PC-9 (cell line): ENCODE measurements at regions of chr4 and their contacts with region 1.

Region 1: GRCh38 chr4:81405894-81406401 is 65.8 kb downstream of the RASGEF1B start:
- DNase-seq: peak; percentile 8 to 52
- H3K4me3 ChIP-seq: no peak overlapping the region
- H3K27ac ChIP-seq: no peak overlapping the region
- H3K4me1 ChIP-seq: no peaks in the 10 kb centered on the region
- H3K27me3 ChIP-seq: no peaks in the 10 kb centered on the region
- CTCF ChIP-seq: peak; percentile 87

Region 2: DNA sequence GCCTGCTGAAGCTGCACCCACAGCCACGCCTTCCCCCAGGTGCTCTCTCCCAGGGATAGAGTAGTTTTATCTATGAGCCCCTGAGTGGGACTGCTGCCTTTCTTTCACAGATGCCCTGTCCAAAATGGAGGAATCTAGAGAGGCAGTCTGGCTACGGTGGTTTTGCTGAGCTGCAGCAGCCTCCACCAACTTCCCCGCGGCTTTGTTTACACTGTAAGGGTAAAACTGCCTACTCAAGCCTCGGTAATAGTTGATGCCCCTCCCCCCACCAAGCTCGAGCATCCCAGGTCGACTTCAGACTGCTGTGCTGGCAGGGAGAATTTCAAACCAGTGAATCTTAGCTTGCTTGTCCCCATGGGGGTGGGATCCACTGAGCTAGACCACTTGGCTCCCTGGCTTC is 275.4 kb before region 1 on chr4:
- CTCF ChIA-PET with region 1: no interaction called
- POLR2A ChIA-PET with region 1: no interaction called
- intact Hi-C with region 1: no loop called
- DNase-seq: no peak
- H3K4me3 ChIP-seq: no peak overlapping the region
- H3K27ac ChIP-seq: no peak overlapping the region
- H3K4me1 ChIP-seq: no peaks in the 10 kb centered on the region
- H3K27me3 ChIP-seq: no peaks in the 10 kb centered on the region
- CTCF ChIP-seq: no peak

Region 3: DNA sequence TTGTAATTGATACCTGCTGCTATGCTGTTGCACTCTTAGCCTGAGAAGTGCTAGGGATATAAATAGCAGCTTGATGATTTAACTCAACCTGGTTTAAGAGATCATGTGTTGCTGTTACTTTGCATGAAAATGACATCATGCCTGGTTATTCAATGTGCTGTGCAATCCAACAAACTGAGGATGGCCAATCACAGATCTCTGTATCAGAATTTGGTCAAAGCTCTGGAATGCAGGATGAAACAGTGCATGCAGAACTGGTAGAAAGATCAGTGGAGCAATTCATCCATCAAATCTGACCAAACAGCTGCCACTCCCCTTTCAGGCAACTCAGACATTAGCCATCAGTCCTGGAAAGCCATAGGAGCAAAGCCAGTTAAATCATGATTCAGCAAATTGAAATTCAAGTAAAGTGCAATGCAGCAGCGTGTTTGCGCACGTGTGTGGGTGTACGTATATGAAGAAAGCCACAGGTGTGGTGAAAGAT is 226.1 kb after region 1 on chr4:
- CTCF ChIA-PET with region 1: no interaction called
- POLR2A ChIA-PET with region 1: no interaction called
- intact Hi-C with region 1: loop called (anchors 10 kb)
- DNase-seq: peak; percentile 41 to 79
- H3K4me3 ChIP-seq: no peak overlapping the region
- H3K27ac ChIP-seq: peak overlapping the region; percentile 59
- H3K4me1 ChIP-seq: 0 out of 2 replicates have a peak, but pooled peaks cover 5% of the 10 kb centered on the region
- H3K27me3 ChIP-seq: no peaks in the 10 kb centered on the region
- CTCF ChIP-seq: no peak

Region 4: GRCh38 chr4:81844717-81845116 is 438.8 kb after region 1 on chr4:
- CTCF ChIA-PET with region 1: no interaction called
- POLR2A ChIA-PET with region 1: no interaction called
- intact Hi-C with region 1: loop called (anchors 1 kb)
- DNase-seq: peak; percentile 58 to 74
- H3K4me3 ChIP-seq: no peak overlapping the region
- H3K27ac ChIP-seq: no peak overlapping the region
- H3K4me1 ChIP-seq: no peaks in the 10 kb centered on the region
- H3K27me3 ChIP-seq: no peaks in the 10 kb centered on the region
- CTCF ChIP-seq: peak; percentile 60

Region 5: GRCh38 chr4:82201805-82202641 is 796.1 kb after region 1 on chr4:
- CTCF ChIA-PET with region 1: no interaction called
- POLR2A ChIA-PET with region 1: no interaction called
- intact Hi-C with region 1: loop called (anchors 2 kb)
- DNase-seq: peak in 1 of 2 experiments; percentile 6
- H3K4me3 ChIP-seq: no peak overlapping the region
- H3K27ac ChIP-seq: no peak overlapping the region
- H3K4me1 ChIP-seq: no peaks in the 10 kb centered on the region
- H3K27me3 ChIP-seq: no peaks in the 10 kb centered on the region
- CTCF ChIP-seq: peak; percentile 72

Region 6: DNA sequence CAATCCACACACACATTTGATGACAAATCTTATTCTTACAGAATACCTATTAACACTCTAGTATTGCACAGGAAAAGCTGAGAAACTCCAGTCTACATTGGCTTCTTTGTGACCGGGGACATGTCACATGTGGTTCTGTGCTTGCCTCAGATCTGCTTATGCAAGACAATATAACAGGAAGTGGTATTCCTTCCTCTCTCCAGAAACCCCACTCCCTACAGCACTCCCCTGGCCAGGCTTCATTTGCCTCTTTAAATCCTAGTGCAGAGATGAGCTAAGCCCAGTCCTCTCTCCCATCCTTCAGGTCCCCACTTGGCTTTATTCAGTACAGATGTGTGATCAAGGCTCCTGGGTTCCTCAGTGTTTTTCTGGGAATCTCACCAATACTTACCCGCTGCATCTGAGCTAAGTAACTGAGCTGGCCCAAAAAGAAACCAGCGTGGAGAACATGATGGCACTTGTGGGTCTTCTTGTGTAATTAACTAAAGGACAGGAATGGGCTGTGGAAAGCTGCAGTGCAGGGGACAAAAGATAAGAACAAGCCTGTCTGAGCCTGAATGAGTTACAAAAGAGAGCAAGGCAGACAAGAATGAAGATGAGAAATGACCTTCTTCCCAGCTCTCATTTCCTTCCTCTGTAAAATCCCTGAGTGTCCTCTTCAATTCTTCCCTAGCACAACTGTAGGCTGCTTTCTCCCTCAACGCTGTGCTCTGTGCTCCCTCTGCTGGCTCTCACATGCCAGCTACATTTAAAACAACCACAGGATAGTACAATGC is 862.3 kb after region 1 on chr4:
- CTCF ChIA-PET with region 1: no interaction called
- POLR2A ChIA-PET with region 1: no interaction called
- intact Hi-C with region 1: loop called (anchors 1 kb)
- DNase-seq: no peak
- H3K4me3 ChIP-seq: no peak overlapping the region
- H3K27ac ChIP-seq: no peak overlapping the region
- H3K4me1 ChIP-seq: no peaks in the 10 kb centered on the region
- H3K27me3 ChIP-seq: no peaks in the 10 kb centered on the region
- CTCF ChIP-seq: peak; percentile 67

Region 7: GRCh38 chr4:82360298-82361177 is 954.6 kb after region 1 on chr4:
- CTCF ChIA-PET with region 1: no interaction called
- POLR2A ChIA-PET with region 1: no interaction called
- intact Hi-C with region 1: loop called (anchors 5 kb)
- DNase-seq: no peak
- H3K4me3 ChIP-seq: no peak overlapping the region
- H3K27ac ChIP-seq: 0 out of 2 replicates have a peak overlapping the region, but pooled peaks have one; percentile 19
- H3K4me1 ChIP-seq: no peaks in the 10 kb centered on the region
- H3K27me3 ChIP-seq: no peaks in the 10 kb centered on the region
- CTCF ChIP-seq: peak; percentile 65